HEK293T (cell line): ENCODE measurements at regions of chr2 and their contacts with region 1.

Region 1: DNA sequence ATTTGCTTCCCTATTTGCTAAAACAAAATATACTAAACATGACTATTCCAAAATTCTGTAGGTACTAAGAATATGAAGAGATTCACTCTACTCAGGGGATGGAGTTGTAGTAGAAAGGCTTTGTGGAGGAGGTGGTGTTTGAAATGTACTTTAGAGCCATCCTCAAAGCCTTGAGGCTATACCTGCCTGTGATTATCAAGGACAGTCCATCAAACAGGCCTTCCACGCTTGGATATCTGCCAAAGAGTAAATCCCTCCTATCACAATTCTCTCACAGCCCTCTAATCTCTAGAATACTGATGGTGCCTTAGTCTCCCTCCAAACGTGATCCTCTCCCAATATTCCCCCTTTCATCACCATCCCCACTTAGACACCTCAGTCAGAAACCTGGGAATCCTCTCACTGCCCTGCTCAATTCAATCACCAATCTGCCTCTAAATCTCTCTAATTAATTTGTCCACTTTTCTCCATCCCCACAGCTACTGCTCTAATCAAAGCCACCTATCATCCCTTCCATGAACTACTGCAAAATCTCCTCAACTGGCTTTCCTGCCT is 13.1 kb downstream of the SOS1 start:
- DNase-seq: no peak

Region 2: DNA sequence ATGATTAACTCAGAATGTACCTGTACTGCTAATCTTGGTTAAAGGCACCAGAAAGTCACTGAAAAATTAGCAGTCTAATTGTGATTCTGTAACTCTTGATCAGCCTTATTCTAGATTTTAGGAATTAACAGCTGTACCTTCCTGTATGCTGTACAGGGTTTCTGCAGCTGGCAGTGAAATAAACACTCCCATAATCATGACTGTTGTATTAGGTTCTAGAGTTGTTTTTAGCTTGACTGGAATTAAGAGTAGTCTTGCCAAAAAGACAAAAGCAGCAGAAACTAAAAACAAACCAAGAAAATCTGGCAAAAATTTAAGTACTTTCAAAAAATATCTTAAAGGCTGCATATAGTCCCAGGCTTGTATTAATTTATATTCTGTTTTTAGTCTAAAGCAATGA is 90.5 kb before region 1 on chr2:
- CTCF ChIA-PET with region 1: no interaction called
- POLR2A ChIA-PET with region 1: no interaction called
- DNase-seq: no peak

Region 3: DNA sequence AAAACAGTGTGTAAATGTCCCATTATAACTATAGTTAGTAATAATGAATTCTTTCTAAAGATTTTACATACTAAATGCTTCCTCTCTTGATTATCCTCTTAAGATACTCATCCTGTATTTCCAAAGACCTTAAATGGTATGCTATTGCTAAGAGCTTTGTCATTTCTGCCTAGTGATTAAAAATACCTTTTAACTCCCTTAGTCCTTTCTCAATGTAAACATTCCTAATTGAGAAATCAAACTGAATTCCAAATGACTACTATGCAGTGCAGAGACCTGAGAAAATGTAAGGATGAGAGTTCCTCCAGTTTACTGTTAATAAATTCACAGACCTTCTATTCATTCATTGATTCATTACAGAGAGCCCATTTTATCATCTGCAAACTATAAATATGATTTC is 73.8 kb before region 1 on chr2:
- CTCF ChIA-PET with region 1: no interaction called
- POLR2A ChIA-PET with region 1: no interaction called
- DNase-seq: no peak

Region 4: DNA sequence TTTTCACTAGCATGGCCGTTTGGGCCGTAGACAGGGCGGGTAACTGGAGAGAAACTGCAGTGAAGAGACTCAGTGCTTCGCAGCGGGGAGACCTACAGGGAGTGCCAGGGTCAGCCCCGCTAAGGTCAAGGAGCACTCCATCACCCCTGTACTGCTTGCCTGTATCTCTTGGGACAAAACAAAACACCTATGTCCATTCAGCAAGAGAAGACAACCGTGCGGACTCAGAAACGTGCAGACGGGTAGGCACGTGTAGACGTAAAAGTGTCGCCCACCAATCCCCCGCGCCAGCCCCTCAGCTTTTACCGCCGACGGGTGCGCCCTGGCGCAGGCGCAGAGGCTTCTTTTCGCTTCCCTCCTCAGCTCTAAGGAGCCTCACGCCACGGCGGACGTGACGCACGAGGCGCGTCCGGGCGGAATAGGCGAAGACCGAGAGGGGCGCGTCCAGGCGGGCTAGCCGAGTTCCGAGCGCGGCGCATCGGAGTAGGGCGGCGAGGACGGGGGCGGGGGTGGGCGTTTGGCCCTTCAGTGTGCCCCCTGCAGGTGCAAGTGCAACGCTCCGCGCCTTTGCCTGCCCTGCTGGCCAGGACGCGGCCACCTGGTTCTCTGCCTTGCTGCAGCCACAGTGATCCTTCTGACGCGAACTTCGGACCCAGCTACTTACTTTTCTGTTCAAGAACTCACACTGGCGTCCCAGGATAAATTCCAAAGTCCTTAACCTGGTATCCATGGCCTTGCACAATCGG is 16.4 kb after region 1 on chr2:
- CTCF ChIA-PET with region 1: no interaction called
- POLR2A ChIA-PET with region 1: interaction called, 19 read pairs
- DNase-seq: peak; percentile 92